Activated CD4-positive, alpha-beta T cell treated with anti-CD3 and anti-CD28 coated beads, Interleukin-2, amount 10 ng/mL, durations not matched to agents 24 days and 14 days (primary cell): ENCODE measurements at regions of chr11 and their contacts with region 1.

Region 1: DNA sequence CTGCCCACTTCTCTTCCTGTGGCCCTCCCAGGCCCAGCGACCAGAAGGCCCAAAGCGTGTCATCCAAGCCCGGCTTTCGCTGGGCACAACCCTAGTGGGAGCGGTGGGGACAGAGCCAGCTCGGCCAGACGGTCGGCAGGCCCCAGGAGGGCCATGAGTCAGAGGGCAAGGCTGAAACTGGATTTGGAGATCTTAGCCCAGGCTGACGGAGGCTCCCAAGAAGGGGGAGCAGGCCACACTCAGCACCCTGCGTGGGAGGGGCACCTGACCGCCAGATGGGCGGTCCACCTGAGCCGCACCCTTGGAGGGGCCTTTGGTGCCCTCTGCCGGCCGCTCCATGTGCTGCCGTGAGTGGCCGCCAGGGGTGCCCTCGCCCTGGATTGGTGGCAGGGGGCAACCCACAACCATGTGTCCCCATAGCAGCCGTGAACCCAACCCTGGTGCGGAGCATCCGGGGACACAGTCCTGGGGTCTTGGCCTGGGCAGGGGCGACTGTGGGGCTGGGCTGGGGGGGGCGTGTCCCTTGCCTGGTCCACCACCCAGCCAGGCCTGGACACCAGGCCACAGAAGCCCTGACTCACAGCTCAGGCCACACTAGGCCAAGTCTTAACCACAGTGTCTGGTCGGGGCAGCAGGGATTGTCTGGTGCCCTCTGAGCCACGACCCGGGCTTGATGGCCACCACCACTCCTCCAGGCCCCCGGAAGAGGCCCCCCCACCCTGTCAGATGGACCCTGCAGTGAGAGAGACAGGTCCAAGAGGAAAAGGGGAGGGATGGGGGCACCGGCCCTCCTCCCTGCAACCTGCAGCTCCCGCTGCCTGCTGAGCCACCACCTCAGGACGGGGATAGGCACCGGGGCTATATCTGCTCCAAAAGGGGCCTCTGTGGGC is 19.2 kb upstream of the TALDO1 start:
- DNase-seq: peak; percentile 95
- H3K4me3 Mint-ChIP-seq: no peak overlapping the region
- H3K27ac Mint-ChIP-seq: no peak overlapping the region
- H3K4me1 Mint-ChIP-seq: peaks cover 8% of the 10 kb centered on the region
- H3K27me3 Mint-ChIP-seq: peaks cover 5% of the 10 kb centered on the region

Region 2: DNA sequence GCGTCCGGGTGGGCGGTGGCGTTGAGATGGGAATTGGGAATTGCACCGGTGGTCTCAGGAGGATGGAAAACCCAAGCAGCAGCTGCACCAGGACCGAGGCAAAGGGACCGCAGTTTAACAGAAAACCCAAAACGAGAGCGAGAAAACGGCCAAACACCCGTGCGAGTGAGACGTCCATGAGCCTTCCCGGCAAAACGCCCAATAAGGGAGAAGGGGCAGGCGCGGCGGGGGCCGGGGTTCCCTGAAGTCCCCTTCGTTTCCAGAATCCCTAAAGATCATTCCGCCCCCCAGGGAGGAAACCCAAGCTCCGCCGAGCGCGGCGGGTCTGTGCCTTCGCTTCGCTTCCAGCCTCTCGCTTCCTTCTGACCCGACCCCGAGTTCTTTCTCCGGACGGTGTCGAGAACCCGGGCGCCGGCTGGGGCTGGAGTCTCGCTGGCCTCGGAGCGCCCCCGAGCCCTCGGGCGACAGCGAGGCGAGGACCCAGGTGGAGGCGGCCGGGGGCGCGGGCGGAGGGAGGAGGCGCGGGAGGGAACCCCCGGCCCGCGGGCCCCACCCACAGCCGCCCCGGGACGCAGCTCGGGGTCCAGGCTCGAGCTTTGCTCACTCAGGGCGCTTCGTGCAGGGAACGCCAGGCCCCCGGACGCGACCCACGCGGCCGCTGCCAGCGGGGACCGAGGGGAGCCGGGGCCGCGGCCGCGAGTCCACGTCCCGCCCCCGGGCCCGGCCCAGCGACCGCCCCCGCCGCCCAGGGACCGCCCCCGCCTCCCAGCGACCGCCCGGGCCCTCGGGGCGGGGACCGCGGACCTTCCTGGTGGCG is 439.6 kb before region 1 on chr11 and contains the start of gene PGGHG:
- intact Hi-C with region 1: no loop called
- DNase-seq: peak; percentile 92
- H3K4me3 Mint-ChIP-seq: peak within 1 kb of the TSS; percentile 98
- H3K27ac Mint-ChIP-seq: peak within 1 kb of the TSS; percentile 97
- H3K4me1 Mint-ChIP-seq: peaks cover 30% of the 10 kb centered on the region
- H3K27me3 Mint-ChIP-seq: peaks cover 9% of the 10 kb centered on the region
- total RNA-seq, gene PGGHG: 136 and 142 TPM in 2 replicates

Region 3: DNA sequence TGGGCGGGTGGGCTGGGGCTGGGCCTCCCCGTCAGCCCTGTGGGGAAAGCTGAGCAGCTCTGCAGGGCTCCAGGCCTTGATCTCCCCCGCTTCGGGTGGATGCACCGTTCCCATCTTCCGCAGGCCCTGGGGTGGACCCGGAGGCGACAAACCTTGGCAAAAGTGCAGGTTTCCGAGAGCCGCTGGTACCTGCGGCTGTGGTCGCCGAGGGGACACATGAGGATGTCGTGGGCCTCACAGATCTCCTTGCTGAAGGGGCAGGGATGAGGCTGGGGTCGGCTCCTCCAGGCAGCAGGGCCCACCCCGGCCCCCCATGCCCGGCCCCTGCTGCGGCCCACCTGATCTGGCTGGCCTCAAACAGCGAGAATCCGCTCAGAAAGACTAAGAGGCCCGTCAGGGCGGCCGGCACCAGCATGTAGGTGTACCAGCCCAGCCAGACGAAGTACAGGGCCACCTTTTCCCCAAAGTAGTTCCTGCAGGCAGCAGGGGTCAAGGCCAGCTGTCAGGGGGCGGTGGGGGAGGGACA is 298.1 kb before region 1 on chr11:
- intact Hi-C with region 1: no loop called
- DNase-seq: no peak
- H3K4me3 Mint-ChIP-seq: no peak overlapping the region
- H3K27ac Mint-ChIP-seq: no peak overlapping the region
- H3K4me1 Mint-ChIP-seq: no peaks in the 10 kb centered on the region
- H3K27me3 Mint-ChIP-seq: no peaks in the 10 kb centered on the region

Region 4: GRCh38 chr11:554824-555472 is 173.2 kb before region 1 on chr11:
- intact Hi-C with region 1: loop called (anchors 1 kb)
- DNase-seq: peak; percentile 93
- H3K4me3 Mint-ChIP-seq: peak overlapping the region; percentile 51
- H3K27ac Mint-ChIP-seq: no peak overlapping the region
- H3K4me1 Mint-ChIP-seq: peaks cover 3% of the 10 kb centered on the region
- H3K27me3 Mint-ChIP-seq: peaks cover 15% of the 10 kb centered on the region

Region 5: GRCh38 chr11:662689-663274 is 65.3 kb before region 1 on chr11:
- intact Hi-C with region 1: loop called (anchors 1 kb)
- DNase-seq: peak; percentile 81
- H3K4me3 Mint-ChIP-seq: no peak overlapping the region
- H3K27ac Mint-ChIP-seq: no peak overlapping the region
- H3K4me1 Mint-ChIP-seq: peaks cover 2% of the 10 kb centered on the region
- H3K27me3 Mint-ChIP-seq: no peaks in the 10 kb centered on the region

Region 6: GRCh38 chr11:695538-696248 is 32.4 kb before region 1 on chr11 and contains the start of gene TMEM80:
- intact Hi-C with region 1: loop called (anchors 2 kb)
- DNase-seq: peak; percentile 99
- H3K4me3 Mint-ChIP-seq: peak within 1 kb of the TSS; percentile 90
- H3K27ac Mint-ChIP-seq: peak within 1 kb of the TSS; percentile 94
- H3K4me1 Mint-ChIP-seq: peaks cover 42% of the 10 kb centered on the region
- H3K27me3 Mint-ChIP-seq: no peaks in the 10 kb centered on the region
- total RNA-seq, gene TMEM80: 12.3 and 12.5 TPM in 2 replicates

Region 7: GRCh38 chr11:747158-748006 is 19.3 kb after region 1 on chr11 and contains the start of gene TALDO1:
- intact Hi-C with region 1: loop called (anchors 2 kb)
- DNase-seq: peak; percentile 97
- H3K4me3 Mint-ChIP-seq: peak within 1 kb of the TSS; percentile 90
- H3K27ac Mint-ChIP-seq: peak within 1 kb of the TSS; percentile 82
- H3K4me1 Mint-ChIP-seq: peaks cover 14% of the 10 kb centered on the region
- H3K27me3 Mint-ChIP-seq: no peaks in the 10 kb centered on the region
- total RNA-seq, gene TALDO1: 265 and 279 TPM in 2 replicates